ENCODE measurements at regions of chr2 and their contacts with region 1.

Region 1: GRCh38 chr2:71100195-71100964 is 29.6 kb downstream of the MCEE start:
- DNase-seq: peak in 8 of 9 experiments; percentile 12 to 62 (median 44)
- ATAC-seq: peak; percentile 51
- H3K4me3 ChIP-seq: no peak overlapping the region
- H3K4me3 Mint-ChIP-seq: no peak overlapping the region
- H3K27ac ChIP-seq: no peak overlapping the region
- H3K27ac Mint-ChIP-seq: no peak overlapping the region
- H3K4me1 ChIP-seq: no peaks in the 10 kb centered on the region
- H3K4me1 Mint-ChIP-seq: no peaks in the 10 kb centered on the region
- H3K27me3 ChIP-seq: no peaks in the 10 kb centered on the region
- H3K27me3 Mint-ChIP-seq: peaks cover 7% of the 10 kb centered on the region
- CTCF ChIP-seq: peak; percentile 68

Region 2: DNA sequence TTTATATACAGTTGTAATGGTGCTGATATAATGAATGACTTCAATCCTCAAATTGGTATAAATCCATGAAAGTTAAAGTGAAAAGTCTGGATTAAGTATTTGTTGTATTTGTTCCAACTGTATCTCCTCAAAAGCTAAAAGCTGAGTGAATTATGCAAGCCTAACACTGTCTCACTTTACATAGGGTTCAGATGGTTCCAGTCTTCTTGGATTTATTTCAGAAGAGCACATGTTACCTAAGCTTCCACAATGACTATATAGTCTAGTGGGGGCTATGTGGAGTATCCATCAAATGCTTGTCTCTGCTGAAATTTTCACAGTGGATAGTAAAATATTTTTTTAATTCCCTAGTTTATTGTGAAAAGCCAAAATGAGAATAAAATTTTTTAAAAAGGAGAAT is 16.7 kb after region 1 on chr2:
- CTCF ChIA-PET with region 1: interaction called, 21 read pairs
- POLR2A ChIA-PET with region 1: no interaction called
- intact Hi-C with region 1: no loop called
- DNase-seq: no peak
- ATAC-seq: no peak
- H3K4me3 ChIP-seq: no peak overlapping the region
- H3K4me3 Mint-ChIP-seq: no peak overlapping the region
- H3K27ac ChIP-seq: no peak overlapping the region
- H3K27ac Mint-ChIP-seq: no peak overlapping the region
- H3K4me1 ChIP-seq: no peaks in the 10 kb centered on the region
- H3K4me1 Mint-ChIP-seq: peaks cover 2% of the 10 kb centered on the region
- H3K27me3 ChIP-seq: no peaks in the 10 kb centered on the region
- H3K27me3 Mint-ChIP-seq: no peaks in the 10 kb centered on the region
- CTCF ChIP-seq: no peak

Measured in CD8-positive, alpha-beta T cell (primary cell).